ENCODE measurements at regions of chr9 and their contacts with region 1.

Region 1: GRCh38 chr9:86079865-86080469 is 19.4 kb downstream of the GOLM1 start:
- DNase-seq: no peak

Region 2: GRCh38 chr9:87276327-87276841 is 1196.4 kb after region 1 on chr9:
- intact Hi-C with region 1: loop called in 1 of 2 experiments (anchors 5 kb)
- DNase-seq: no peak